HEK293 (cell line): ENCODE measurements at regions of chr12 and their contacts with region 1.

Region 1: GRCh38 chr12:62435303-62436163 is 31.1 kb upstream of the MON2 start:
- H3K4me3 ChIP-seq: peak overlapping the region; percentile 27
- H3K27ac ChIP-seq: no peak overlapping the region
- H3K4me1 ChIP-seq: no peaks in the 10 kb centered on the region
- CTCF ChIP-seq: peak; percentile 83; the same call in 1 of the 2 replicates

Region 2: GRCh38 chr12:62014330-62014729 is 421.2 kb before region 1 on chr12:
- CTCF ChIA-PET with region 1: no interaction called
- POLR2A ChIA-PET with region 1: no interaction called
- H3K4me3 ChIP-seq: no peak overlapping the region
- H3K27ac ChIP-seq: no peak overlapping the region
- H3K4me1 ChIP-seq: no peaks in the 10 kb centered on the region
- CTCF ChIP-seq: no peak

Region 3: DNA sequence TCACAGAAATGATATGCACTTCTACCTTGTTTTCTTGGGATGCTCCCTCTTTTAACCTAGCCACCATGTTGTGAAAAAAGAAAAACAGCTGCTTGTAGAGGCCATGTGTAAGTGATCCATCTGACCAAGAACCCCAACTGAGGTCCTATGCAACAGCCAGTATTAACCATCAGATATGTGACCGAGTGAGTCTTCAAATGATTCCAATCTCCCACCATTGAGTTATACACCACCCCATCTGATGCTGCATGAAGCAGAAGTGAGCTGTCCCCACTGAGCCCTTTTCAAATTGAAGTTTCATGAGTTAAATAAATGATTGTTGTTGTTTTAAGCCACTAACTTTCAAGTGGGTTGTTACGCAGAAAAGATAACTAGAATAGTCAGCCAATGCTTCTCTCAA is 196.0 kb before region 1 on chr12:
- CTCF ChIA-PET with region 1: no interaction called
- POLR2A ChIA-PET with region 1: no interaction called
- H3K4me3 ChIP-seq: no peak overlapping the region
- H3K27ac ChIP-seq: no peak overlapping the region
- H3K4me1 ChIP-seq: no peaks in the 10 kb centered on the region
- CTCF ChIP-seq: no peak

Region 4: GRCh38 chr12:62375603-62376002 is 59.9 kb before region 1 on chr12:
- CTCF ChIA-PET with region 1: no interaction called
- POLR2A ChIA-PET with region 1: no interaction called
- H3K4me3 ChIP-seq: no peak overlapping the region
- H3K27ac ChIP-seq: no peak overlapping the region
- H3K4me1 ChIP-seq: no peaks in the 10 kb centered on the region
- CTCF ChIP-seq: no peak

Region 5: GRCh38 chr12:62414180-62414579 is 21.4 kb before region 1 on chr12:
- CTCF ChIA-PET with region 1: interaction called, 16 read pairs
- POLR2A ChIA-PET with region 1: no interaction called
- H3K4me3 ChIP-seq: no peak overlapping the region
- H3K27ac ChIP-seq: no peak overlapping the region
- H3K4me1 ChIP-seq: no peaks in the 10 kb centered on the region
- CTCF ChIP-seq: no peak

Region 6: GRCh38 chr12:62466594-62467491 is 31.3 kb after region 1 on chr12 and contains the start of gene MON2:
- CTCF ChIA-PET with region 1: interaction called, 10 read pairs
- POLR2A ChIA-PET with region 1: interaction called, 3 read pairs
- H3K4me3 ChIP-seq: peak within 1 kb of the TSS; percentile 92
- H3K27ac ChIP-seq: peak within 1 kb of the TSS; percentile 68
- H3K4me1 ChIP-seq: 0 out of 2 replicates have a peak, but pooled peaks cover 2% of the 10 kb centered on the region
- CTCF ChIP-seq: 0 out of 2 replicates have a peak, but pooled peaks have one; percentile 31

Region 7: GRCh38 chr12:62537551-62537950 is 102.0 kb after region 1 on chr12:
- CTCF ChIA-PET with region 1: no interaction called
- POLR2A ChIA-PET with region 1: no interaction called
- H3K4me3 ChIP-seq: no peak overlapping the region
- H3K27ac ChIP-seq: no peak overlapping the region
- H3K4me1 ChIP-seq: no peaks in the 10 kb centered on the region
- CTCF ChIP-seq: no peak

Region 8: DNA sequence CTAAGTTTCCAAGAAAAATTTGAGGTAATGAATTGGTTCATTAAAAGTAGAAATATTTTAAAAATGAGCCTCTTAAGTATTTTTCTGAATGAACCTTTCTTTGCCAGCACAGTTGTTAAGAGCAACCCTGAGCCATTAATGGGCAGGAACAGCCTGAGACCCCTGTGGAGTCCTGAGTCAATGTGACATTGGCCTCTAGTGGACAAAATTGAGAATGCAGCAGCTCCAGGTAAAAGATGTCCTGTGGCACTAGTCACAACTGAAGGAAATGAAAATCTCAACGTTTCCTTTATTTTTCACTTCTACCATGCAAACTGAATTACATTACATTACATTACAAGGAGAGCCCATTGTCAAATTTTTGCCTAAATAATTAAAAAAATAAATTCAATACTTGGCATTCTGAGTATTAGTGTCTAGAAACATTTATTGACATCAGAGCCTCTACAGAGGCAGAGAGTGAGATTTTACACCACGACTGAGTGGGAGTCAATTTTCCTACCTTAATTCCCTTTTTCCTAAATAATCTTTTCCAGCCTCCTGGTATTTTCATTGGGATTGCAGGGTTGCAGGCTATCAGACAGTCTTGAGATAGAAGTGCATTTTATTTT is 363.7 kb after region 1 on chr12:
- CTCF ChIA-PET with region 1: interaction called, 90 read pairs
- POLR2A ChIA-PET with region 1: no interaction called
- H3K4me3 ChIP-seq: no peak overlapping the region
- H3K27ac ChIP-seq: no peak overlapping the region
- H3K4me1 ChIP-seq: peaks cover 3% of the 10 kb centered on the region; the same call in 1 of the 2 replicates
- CTCF ChIP-seq: peak; percentile 35; the same call in 1 of the 2 replicates